Sigmoid colon (tissue), 7 donors: ENCODE measurements at regions of chr1 and their contacts with region 1.

Region 1: DNA sequence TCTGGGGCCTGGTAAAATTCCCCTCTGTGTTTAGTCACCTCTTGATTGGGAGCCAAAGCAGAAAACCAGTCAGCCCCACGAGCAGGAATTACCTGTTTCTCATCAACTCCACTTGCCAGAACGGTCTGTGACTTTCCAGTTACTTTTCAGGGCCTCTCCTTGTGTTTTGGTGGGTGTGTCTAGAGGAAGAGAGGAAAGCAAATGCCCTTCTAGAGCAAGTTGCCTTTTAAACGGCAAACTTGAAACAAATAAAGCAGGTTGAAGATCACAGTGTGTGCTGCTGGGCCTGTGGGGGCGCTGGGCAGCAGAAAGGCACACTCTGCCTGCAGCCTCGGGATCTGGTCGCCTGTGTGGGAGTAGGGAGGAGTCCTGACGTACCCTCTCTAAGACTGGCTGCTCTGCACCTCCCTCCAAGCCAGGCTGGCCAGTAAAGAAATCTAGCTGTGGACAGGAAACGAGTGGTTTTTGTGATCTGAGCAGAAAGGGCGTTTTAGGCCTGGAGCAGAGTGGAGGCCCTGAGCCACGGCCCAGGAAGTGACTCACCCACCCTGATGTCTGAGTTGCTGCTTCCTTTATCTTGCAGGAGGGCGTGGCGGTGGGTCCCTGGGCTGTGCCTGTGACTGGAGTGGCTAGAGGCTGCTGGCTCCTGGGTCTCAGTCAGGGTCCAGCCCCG is 11.1 kb upstream of the S100A11 start:
- DNase-seq: peak; percentile 96
- H3K4me3 ChIP-seq: peak overlapping the region in 2 of 4 donors; percentile 20 to 27
- H3K27ac ChIP-seq: peak overlapping the region; percentile 89 to 95 (median 92)
- H3K4me1 ChIP-seq: peaks cover 0 to 23% (median 19%) of the 10 kb centered on the region in 4 donors
- H3K27me3 ChIP-seq: no peaks in the 10 kb centered on the region
- CTCF ChIP-seq: peak in 3 of 4 experiments; percentile 24 to 53 (median 48)
- EP300 ChIP-seq: peak in 1 of 4 donors; percentile 76
- POLR2A ChIP-seq: peak; percentile 43 to 57

Region 2: GRCh38 chr1:152036267-152037216 is 11.3 kb before region 1 on chr1 and contains the start of gene S100A11:
- intact Hi-C with region 1: loop called (anchors 1 kb)
- DNase-seq: peak; percentile 95
- H3K4me3 ChIP-seq: peak within 1 kb of the TSS; percentile 50 to 69 (median 60)
- H3K27ac ChIP-seq: peak within 1 kb of the TSS; percentile 82 to 92 (median 89)
- H3K4me1 ChIP-seq: peaks cover 0 to 30% (median 27%) of the 10 kb centered on the region in 4 donors
- H3K27me3 ChIP-seq: no peaks in the 10 kb centered on the region
- CTCF ChIP-seq: no peak
- EP300 ChIP-seq: peak in 1 of 4 donors; percentile 16
- POLR2A ChIP-seq: peak; percentile 69 to 91
- total RNA-seq, gene S100A11: 92.6 to 156 (median 109) TPM

Region 3: GRCh38 chr1:152440635-152441471 is 393.0 kb after region 1 on chr1:
- intact Hi-C with region 1: loop called (anchors 5 kb)
- DNase-seq: peak; percentile 85
- H3K4me3 ChIP-seq: no peak overlapping the region
- H3K27ac ChIP-seq: no peak overlapping the region
- H3K4me1 ChIP-seq: peaks cover 0 to 33% (median 12%) of the 10 kb centered on the region in 4 donors
- H3K27me3 ChIP-seq: no peaks in the 10 kb centered on the region
- CTCF ChIP-seq: peak; percentile 53 to 78 (median 68)
- EP300 ChIP-seq: no peak
- POLR2A ChIP-seq: no peak